KBM-7 (cell line): ENCODE measurements at regions of chr11 and their contacts with region 1.

Region 1: GRCh38 chr11:58629857-58630256 is 7.4 kb downstream of the CNTF start:
- DNase-seq: peak; percentile 63

Region 2: GRCh38 chr11:58406774-58407173 is 223.1 kb before region 1 on chr11 and contains the start of gene OR5B3:
- in situ Hi-C with region 1: no loop called
- DNase-seq: no peak

Region 3: DNA sequence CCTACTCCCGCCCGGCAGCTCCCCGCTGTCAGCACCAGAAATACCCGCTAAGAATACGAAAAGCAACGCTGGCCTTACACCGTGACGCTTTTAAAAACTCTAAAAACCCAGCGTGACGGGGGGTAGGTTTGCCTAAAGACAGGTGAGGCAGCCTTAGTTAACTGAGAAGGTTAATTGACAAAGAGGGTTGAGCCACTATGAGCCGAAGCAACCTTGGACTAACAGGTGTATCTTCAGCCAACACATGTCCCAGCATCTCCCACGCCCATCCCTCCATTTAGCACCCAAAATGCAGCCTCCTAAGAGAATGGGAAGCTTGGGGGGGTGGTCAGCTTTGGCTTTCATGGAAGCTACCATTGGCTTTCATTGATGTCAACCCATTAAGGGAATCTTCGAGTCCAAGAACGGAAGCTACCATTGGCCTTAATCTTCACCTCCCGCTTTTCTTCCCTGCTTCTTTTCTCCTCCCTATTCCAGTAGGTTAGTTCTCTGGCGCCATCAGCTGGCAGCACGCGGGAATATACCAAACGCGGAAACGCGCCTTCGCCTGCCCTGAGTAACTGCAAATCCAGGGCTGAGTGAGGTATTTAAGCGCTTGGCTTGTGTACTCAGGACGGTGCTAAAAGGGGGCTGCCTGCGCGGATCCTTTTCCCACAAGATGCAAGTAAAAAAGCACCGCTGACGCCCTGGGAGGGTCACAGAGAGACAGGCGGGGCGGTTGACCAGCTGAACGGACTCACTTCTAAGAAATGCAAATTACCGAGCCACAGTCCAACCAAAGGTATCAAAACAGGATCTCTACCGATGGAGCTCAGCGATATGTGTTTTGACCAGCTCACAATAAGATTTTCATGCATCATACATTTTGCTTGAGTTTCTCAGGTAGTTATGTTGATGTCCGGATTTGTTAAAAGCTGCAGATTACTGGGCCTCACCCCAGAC is 270.9 kb after region 1 on chr11:
- in situ Hi-C with region 1: loop called (anchors 25 kb)
- DNase-seq: peak; percentile 95